ENCODE measurements at regions of chr2 and their contacts with region 1.

Region 1: DNA sequence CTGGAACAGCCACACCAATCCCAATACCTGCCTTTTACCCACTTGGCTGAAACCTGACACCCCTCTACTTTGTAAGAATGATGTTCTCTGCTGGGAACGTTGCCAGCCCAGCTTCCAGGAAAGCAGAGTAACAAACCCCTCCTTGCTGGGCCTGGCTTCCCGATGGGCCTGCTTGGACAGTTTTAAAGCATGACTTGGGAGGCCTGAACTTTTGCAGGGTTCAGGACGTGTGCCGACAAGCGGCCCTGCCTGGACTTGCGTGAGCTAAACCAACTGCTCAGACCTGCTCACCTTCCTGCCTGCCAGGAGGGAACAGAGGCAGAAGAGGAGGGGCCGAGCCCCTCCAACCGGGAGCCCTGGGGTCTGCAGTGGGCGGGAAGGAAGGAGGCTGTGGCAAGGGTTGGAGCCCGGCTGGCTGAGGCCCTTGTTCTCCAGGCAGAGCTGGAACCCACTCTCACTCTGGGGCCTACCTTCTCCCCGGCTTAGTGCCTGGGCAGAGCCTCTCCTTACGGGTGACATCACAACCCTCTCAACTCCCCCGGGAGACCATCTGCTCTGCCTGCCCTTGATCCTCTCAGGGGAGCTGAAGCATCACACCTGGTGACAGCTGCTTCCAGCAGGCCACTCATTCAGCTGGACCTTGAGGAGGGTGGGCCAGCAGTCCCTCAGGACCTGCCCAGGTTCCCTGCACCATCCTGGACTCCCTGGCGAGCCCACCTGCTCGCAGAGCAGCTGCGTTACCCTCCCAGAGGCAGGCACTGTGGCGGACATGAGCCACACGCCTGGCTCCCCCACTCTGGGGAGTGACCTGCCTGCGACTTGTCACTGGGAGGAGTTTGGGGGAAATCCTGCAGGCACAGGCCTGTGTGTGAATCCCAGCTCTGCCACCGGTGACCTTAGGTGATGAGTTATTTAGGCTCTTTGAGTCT is 13.2 kb downstream of the HS6ST1 start:
- DNase-seq: peak; percentile 96
- H3K4me3 ChIP-seq: peak overlapping the region in 3 of 4 donors; percentile 9 to 24 (median 11)
- H3K27ac ChIP-seq: peak overlapping the region; percentile 70 to 93 (median 84)
- H3K4me1 ChIP-seq: peaks cover 0 to 99% (median 89%) of the 10 kb centered on the region in 4 donors
- H3K27me3 ChIP-seq: no peaks in the 10 kb centered on the region
- CTCF ChIP-seq: no peak
- EP300 ChIP-seq: peak in 3 of 4 donors; percentile 4 to 91 (median 85)
- POLR2A ChIP-seq: no peak

Region 2: GRCh38 chr2:127437781-127438726 is 867.4 kb before region 1 on chr2:
- intact Hi-C with region 1: no loop called
- DNase-seq: no peak
- H3K4me3 ChIP-seq: no peak overlapping the region
- H3K27ac ChIP-seq: no peak overlapping the region
- H3K4me1 ChIP-seq: no peaks in the 10 kb centered on the region
- H3K27me3 ChIP-seq: no peaks in the 10 kb centered on the region
- CTCF ChIP-seq: no peak
- EP300 ChIP-seq: no peak
- POLR2A ChIP-seq: no peak

Region 3: GRCh38 chr2:128008074-128008672 is 297.2 kb before region 1 on chr2:
- intact Hi-C with region 1: no loop called
- DNase-seq: no peak
- H3K4me3 ChIP-seq: no peak overlapping the region
- H3K27ac ChIP-seq: no peak overlapping the region
- H3K4me1 ChIP-seq: no peaks in the 10 kb centered on the region
- H3K27me3 ChIP-seq: no peaks in the 10 kb centered on the region
- CTCF ChIP-seq: no peak
- EP300 ChIP-seq: no peak
- POLR2A ChIP-seq: no peak

Region 4: DNA sequence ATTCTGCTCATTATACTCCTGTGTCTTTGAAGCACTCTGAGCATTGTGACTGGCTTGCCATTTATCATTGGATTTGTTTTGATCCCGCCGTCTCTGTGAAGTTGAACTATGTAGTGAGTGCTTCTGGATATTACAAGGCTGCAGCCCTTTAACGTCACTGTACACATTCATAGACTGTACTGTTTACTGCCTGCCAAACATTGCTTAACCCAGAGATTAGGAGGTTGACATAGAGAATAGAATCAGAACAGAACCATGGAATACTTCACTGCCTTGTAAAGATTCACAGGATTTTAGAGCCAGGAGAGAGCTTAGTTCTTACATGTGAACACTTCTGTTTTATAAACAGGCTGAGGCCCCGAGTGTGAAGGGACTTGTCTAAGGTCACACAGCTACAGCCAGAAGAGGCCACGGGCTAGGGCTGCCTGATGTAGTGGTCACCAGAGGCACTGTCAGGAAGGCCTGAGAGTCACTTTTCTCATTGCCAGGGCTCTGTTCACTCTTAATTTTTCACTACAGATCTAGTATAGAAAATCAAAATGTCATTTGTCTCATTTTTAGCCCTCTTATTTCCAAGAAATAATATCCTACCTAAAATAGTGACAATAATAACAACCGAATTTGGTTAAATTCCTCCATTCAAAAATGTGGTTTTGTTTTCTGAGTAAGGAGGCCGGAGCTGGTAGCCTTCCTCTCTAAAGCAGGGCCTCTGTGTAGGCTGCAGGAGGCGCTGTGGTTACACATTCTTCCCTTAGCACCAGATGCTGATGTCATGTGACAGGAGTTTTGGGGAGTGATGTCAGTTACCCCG is 126.6 kb before region 1 on chr2:
- intact Hi-C with region 1: loop called (anchors 5 kb)
- DNase-seq: peak; percentile 80
- H3K4me3 ChIP-seq: no peak overlapping the region
- H3K27ac ChIP-seq: peak overlapping the region in 3 of 4 donors; percentile 76 to 84 (median 81)
- H3K4me1 ChIP-seq: peaks cover 0 to 36% (median 21%) of the 10 kb centered on the region in 4 donors
- H3K27me3 ChIP-seq: no peaks in the 10 kb centered on the region
- CTCF ChIP-seq: peak; percentile 40 to 88 (median 73)
- EP300 ChIP-seq: peak; percentile 74 to 97 (median 90)
- POLR2A ChIP-seq: no peak

Region 5: DNA sequence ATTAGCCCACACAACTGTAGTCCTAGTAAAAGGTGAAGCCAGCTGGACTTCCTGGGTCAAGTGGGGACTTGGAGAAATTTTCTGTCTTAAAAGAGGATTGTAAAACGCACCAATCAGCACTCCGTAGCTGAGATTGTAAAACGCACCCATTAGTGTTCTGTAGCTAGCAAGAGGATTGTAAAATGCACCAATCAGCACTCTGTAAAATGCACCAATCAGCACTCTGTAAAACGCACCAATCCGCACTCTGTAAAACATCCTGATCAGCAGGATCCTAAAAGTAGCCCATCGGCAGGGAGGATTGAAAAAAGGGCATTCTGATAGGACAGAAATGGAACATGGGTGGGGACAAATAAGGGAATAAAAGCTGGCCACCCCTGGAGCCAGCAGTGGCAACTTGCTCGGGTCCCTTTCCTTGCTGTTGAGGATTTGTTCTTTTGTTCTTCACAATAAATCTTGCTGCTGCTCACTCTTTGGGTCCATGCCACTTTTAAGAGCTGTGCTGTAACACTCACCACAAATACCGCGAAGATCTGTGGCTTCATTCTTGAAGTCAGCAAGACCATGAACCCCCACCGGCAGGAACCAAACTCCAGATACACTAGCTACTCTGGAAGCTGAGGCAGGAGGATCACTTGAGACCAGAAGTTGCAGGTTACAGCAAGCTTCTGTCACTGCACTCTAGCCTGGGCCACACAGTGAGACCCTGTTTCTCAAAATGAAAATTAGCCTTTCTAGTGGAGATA is 89.4 kb before region 1 on chr2:
- intact Hi-C with region 1: no loop called
- DNase-seq: no peak
- H3K4me3 ChIP-seq: no peak overlapping the region
- H3K27ac ChIP-seq: no peak overlapping the region
- H3K4me1 ChIP-seq: no peaks in the 10 kb centered on the region
- H3K27me3 ChIP-seq: no peaks in the 10 kb centered on the region
- CTCF ChIP-seq: no peak
- EP300 ChIP-seq: no peak
- POLR2A ChIP-seq: no peak

Measured in sigmoid colon (tissue), 7 donors.